ENCODE measurements at regions of chr2 and their contacts with region 1.

Region 1: GRCh38 chr2:161273038-161273760 is 35.0 kb upstream of the PSMD14 start:
- DNase-seq: no peak
- H3K4me3 ChIP-seq: no peak overlapping the region
- H3K27ac ChIP-seq: no peak overlapping the region
- H3K4me1 ChIP-seq: no peaks in the 10 kb centered on the region
- H3K27me3 ChIP-seq: no peaks in the 10 kb centered on the region
- CTCF ChIP-seq: peak; percentile 54 to 61 (median 58)

Region 2: DNA sequence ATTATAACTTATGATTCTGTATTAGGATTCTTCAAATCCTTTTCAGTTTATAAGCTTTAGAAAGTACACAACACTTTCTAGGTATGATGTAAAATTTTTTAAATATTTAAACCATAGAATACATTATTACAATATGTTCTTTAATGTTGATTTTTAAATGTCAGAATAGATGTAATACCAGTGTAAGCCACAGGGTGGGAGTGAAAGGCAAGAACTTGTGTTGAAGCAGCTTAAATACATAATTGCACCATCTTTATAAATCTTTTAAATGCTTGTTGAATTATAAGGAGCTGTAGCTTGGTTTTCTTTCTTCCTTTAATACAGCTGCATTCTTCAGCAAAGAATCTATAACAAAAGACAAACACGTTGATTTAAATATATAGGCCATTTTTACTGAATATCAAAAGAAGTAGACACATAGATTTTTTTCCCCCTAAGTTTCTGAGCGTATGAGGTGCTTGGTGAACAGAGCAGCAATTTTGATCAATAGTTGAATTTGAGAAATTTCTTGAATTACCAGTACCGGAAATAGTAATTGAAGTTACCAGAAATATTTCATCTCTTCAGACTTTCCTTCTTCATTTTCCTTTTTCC is 50.0 kb before region 1 on chr2:
- intact Hi-C with region 1: loop called (anchors 5 kb)
- DNase-seq: no peak
- H3K4me3 ChIP-seq: no peak overlapping the region
- H3K27ac ChIP-seq: no peak overlapping the region
- H3K4me1 ChIP-seq: no peaks in the 10 kb centered on the region
- H3K27me3 ChIP-seq: no peaks in the 10 kb centered on the region
- CTCF ChIP-seq: peak; percentile 45 to 68 (median 64)

Region 3: GRCh38 chr2:161283926-161284325 is 10.7 kb after region 1 on chr2:
- intact Hi-C with region 1: no loop called
- DNase-seq: no peak
- H3K4me3 ChIP-seq: no peak overlapping the region
- H3K27ac ChIP-seq: no peak overlapping the region
- H3K4me1 ChIP-seq: no peaks in the 10 kb centered on the region
- H3K27me3 ChIP-seq: no peaks in the 10 kb centered on the region
- CTCF ChIP-seq: no peak

Measured in ascending aorta (tissue), 2 donors.